MCF 10A (cell line): ENCODE measurements at regions of chr18 and their contacts with region 1.

Region 1: DNA sequence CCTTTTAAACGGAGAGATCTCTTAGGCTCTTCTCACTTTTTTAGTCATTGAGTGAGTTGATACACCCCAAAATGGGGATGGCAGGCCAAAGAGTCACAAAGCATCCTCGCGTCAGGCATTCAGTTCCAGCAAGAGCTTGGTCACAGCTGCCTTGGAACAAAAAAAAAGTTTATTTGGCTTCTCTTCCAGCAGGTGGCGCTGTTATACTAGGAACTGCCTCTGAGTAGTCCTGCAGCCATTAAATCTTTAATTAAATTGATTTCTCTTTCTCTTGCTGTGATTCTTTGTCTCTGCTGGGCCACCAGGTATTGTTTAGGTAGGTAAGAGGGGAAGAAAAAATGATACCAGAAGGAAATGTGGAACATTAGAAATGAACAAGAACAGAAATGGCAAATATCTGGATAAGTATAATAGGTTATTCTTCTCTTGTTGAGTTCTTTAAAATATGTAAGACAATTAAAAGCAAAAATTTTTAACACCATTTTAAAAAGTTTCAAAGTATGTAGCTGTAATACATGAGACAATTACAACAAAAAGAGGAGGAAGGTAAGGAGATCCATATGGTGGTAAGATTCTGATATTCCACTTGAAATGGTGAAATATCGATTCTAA is 175.1 kb downstream of the GALNT1 start:
- DNase-seq: peak; percentile 68
- H3K4me3 Mint-ChIP-seq: no peak overlapping the region
- H3K27ac Mint-ChIP-seq: no peak overlapping the region
- H3K4me1 Mint-ChIP-seq: no peaks in the 10 kb centered on the region
- H3K27me3 Mint-ChIP-seq: peaks cover 18% of the 10 kb centered on the region
- CTCF ChIP-seq: peak; percentile 81

Region 2: DNA sequence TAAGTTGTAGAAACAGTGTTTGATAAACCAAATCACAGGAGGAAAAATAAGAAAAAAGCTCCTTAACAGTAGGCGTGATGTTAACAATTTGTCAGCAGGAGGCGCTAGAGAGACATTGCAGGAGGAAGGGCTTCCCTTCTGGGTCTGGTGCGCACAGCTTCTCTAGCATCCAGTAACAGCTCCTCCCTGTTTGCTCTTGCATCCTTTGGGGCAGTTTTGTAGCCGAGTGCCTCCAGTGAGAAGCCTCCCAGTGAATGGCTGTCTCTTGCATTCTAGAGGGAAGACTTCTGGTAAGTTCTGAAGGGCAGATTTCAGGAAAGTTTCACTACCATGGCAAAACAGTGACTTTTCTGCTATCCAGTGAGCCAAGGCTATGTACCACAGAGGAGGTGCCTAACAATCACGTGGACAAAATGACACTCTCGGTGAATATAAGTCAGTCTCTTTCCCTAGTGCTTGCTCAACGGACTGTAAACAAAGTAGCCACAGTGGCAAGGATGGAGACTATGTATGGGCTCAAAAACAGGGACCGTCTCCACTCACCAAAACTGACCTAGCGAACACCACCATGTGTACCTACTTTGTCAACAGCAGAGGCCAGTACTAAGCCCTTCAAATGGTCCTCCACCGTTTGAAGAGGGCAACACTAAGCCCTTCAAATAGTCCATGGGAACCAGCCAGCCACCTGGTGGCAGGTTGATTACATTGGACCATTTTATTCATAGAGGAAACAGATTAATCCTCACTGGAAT is 369.8 kb before region 1 on chr18:
- CTCF ChIA-PET with region 1: interaction called, 11 read pairs
- POLR2A ChIA-PET with region 1: no interaction called
- intact Hi-C with region 1: loop called (anchors 2 kb)
- DNase-seq: peak; percentile 84
- H3K4me3 Mint-ChIP-seq: no peak overlapping the region
- H3K27ac Mint-ChIP-seq: no peak overlapping the region
- H3K4me1 Mint-ChIP-seq: peaks cover 9% of the 10 kb centered on the region
- H3K27me3 Mint-ChIP-seq: no peaks in the 10 kb centered on the region
- CTCF ChIP-seq: peak; percentile 86

Region 3: GRCh38 chr18:35939138-35939537 is 182.5 kb after region 1 on chr18:
- CTCF ChIA-PET with region 1: interaction called, 18 read pairs
- POLR2A ChIA-PET with region 1: no interaction called
- intact Hi-C with region 1: no loop called
- DNase-seq: no peak
- H3K4me3 Mint-ChIP-seq: no peak overlapping the region
- H3K27ac Mint-ChIP-seq: no peak overlapping the region
- H3K4me1 Mint-ChIP-seq: peaks cover 17% of the 10 kb centered on the region
- H3K27me3 Mint-ChIP-seq: no peaks in the 10 kb centered on the region
- CTCF ChIP-seq: no peak

Region 4: DNA sequence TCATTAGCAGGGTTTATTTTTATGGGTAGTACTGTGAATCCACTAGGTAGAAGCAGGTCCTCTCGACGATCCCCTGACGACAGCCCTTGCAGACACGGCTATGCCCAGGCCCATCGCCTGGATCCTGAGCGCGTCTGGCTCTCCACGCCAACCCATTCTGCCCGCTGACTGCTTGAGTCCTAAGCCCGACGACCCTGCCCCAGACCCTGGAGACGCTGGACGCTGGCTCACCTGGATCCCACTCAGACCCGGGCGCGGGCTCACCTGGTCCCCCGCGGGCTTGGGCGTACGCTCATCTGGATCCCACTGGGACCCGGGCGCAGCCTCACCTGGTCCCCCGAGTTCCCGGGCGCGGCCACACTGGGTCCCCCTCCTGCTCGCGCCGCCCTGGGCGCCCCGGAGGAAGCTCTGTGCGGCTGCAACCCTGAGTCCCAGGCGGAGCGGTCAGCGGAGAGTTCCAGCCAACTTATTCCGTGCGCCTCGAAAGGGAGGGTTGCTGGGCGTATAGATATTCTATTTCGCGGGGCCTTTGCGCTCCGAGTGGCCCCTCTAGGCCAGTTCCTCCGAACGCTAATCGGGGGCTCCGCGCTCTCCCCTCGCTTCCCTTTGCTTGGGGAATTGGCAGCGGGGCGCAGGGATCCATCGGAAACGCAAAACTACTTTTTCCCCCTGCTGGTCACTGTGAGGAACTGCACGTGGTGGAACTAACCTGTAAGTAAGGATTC is 193.5 kb after region 1 on chr18:
- CTCF ChIA-PET with region 1: interaction called, 118 read pairs
- POLR2A ChIA-PET with region 1: interaction called, 4 read pairs
- intact Hi-C with region 1: no loop called
- DNase-seq: peak; percentile 66
- H3K4me3 Mint-ChIP-seq: peak overlapping the region; percentile 81
- H3K27ac Mint-ChIP-seq: peak overlapping the region; percentile 35
- H3K4me1 Mint-ChIP-seq: peaks cover 10% of the 10 kb centered on the region
- H3K27me3 Mint-ChIP-seq: peaks cover 10% of the 10 kb centered on the region
- CTCF ChIP-seq: peak; percentile 85

Region 5: GRCh38 chr18:36015629-36016028 is 259.0 kb after region 1 on chr18:
- CTCF ChIA-PET with region 1: interaction called, 6 read pairs
- POLR2A ChIA-PET with region 1: no interaction called
- intact Hi-C with region 1: loop called (anchors 5 kb)
- DNase-seq: no peak
- H3K4me3 Mint-ChIP-seq: no peak overlapping the region
- H3K27ac Mint-ChIP-seq: no peak overlapping the region
- H3K4me1 Mint-ChIP-seq: peaks cover 4% of the 10 kb centered on the region
- H3K27me3 Mint-ChIP-seq: no peaks in the 10 kb centered on the region
- CTCF ChIP-seq: no peak

Region 6: DNA sequence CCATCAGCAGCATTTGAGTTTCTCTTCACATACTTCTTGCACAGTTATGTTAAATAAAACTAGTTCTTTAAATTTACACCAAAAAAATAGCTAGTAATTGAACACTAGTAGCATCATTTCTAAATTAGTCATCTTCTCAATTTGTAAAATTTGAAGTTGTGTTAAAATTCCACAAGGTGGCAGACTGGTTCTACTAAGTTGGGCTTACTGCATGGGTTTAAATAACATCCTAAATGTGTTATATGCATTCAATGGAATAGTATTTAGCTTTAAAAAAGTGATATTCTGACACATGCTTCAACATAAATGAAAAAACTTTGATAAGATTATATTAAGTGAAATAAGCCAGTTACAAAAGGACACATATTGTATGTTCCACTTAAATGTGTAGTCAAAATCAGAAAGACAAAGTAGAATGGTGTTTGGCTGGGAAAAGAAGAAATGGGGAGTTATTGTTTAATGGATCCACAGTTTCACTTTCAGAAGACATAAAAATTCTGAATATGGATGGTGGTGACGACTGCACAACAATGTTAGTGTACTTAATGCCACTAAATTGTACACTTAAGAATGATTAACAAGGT is 339.4 kb after region 1 on chr18:
- CTCF ChIA-PET with region 1: interaction called, 7 read pairs
- POLR2A ChIA-PET with region 1: no interaction called
- intact Hi-C with region 1: loop called (anchors 10 kb)
- DNase-seq: peak; percentile 64
- H3K4me3 Mint-ChIP-seq: no peak overlapping the region
- H3K27ac Mint-ChIP-seq: no peak overlapping the region
- H3K4me1 Mint-ChIP-seq: no peaks in the 10 kb centered on the region
- H3K27me3 Mint-ChIP-seq: no peaks in the 10 kb centered on the region
- CTCF ChIP-seq: peak; percentile 59